ENCODE measurements at regions of chr12 and their contacts with region 1.

Region 1: GRCh38 chr12:71840231-71840847 is 780 bp downstream of the TBC1D15 start:
- DNase-seq: no peak

Region 2: GRCh38 chr12:71780237-71780822 is 60.0 kb before region 1 on chr12:
- intact Hi-C with region 1: loop called (anchors 2 kb)
- DNase-seq: no peak

Measured in cardiac septum (tissue), 1 donor.